ENCODE measurements at regions of chr16 and their contacts with region 1.

Region 1: GRCh38 chr16:1054660-1055556 is 17.6 kb upstream of the SSTR5 start:
- DNase-seq: peak; percentile 84
- ATAC-seq: peak; percentile 88

Region 2: GRCh38 chr16:886084-886543 is 168.8 kb before region 1 on chr16:
- intact Hi-C with region 1: loop called (anchors 10 kb)
- DNase-seq: no peak
- ATAC-seq: peak; percentile 57

Region 3: DNA sequence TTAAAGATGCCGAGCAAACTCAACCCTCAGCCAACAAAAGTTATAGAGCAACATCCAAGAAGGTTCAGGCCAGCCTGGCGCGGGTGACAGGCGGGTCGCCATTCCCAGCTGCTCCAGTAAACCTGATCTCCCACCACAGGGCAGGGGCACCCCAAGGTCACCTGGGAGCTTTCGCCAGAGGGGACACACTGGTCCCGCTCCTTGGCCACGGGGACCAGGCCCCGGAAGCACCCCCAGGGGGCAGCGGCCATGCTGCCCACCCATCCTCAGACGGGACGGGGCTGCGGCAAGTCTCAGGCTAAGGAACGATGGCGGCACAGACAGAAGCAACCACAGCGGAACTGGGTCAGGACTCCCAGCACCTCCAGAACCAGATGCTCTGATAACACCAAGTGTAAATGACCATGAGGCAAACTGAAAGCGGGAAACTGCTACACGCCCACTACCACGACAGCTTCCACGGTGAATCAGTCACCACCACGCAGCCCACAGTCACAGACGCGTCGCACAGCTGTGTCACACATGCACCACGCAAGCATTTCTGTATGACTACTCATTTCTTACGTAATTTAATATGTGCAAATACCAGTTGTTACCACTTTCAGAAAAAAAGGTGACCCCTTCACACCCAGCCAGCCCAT is 403.5 kb after region 1 on chr16:
- intact Hi-C with region 1: no loop called
- DNase-seq: no peak
- ATAC-seq: no peak

Measured in sciatic nerve (tissue), 2 donors.